Ascending aorta (tissue), 2 donors: ENCODE measurements at regions of chr7 and their contacts with region 1.

Region 1: DNA sequence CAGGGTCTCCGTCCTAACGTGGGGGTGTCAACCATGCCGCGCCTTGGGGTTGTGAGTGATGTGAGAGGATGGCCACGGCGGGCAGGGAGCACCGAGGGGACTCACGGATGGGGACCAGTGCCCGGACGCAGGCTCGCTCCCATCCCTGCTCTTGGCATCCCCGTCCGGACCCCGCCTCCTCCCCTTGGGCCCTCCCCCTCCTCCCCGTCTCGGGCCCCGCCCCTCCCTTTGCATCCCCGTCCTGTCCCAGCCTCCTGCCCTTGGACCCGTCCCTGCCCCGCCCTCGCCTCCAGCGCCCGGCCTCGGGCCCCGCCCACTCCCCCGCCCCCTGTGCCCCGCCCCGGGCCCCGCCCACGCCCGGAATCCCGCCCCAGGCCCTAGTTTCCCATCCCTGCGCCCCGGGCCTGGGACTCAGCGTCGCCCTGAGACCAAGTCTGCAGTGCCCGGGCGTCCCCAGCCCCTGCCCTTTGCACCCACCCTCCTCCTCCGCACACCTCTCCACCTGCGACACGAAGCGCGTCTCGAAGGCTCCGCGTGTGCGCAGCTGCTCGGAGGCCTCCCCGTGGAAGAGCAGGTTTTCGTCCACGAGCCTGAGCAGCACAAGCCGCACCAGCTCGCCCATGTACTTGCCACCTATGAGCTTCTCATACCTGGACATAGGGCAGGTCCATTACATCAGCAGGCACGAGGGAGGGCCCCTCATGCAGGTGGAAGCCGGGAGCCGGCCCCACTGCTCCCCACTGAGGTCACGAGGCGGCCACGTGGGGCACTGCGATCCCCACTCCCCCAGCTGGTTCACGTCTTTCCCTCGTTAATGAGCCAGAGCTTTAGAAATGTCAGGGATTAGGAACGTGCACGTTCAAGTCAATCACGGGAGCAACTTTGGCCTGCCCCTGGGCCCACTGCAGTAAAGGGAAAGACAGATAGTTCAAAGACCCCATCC is 5.1 kb upstream of the MYL7 start:
- DNase-seq: peak in 1 of 2 donors; percentile 88
- H3K4me3 ChIP-seq: peak overlapping the region; percentile 56 to 67
- H3K27ac ChIP-seq: no peak overlapping the region
- H3K4me1 ChIP-seq: peaks cover 0 to 8% of the 10 kb centered on the region in 2 donors
- H3K27me3 ChIP-seq: no peaks in the 10 kb centered on the region
- CTCF ChIP-seq: no peak

Region 2: DNA sequence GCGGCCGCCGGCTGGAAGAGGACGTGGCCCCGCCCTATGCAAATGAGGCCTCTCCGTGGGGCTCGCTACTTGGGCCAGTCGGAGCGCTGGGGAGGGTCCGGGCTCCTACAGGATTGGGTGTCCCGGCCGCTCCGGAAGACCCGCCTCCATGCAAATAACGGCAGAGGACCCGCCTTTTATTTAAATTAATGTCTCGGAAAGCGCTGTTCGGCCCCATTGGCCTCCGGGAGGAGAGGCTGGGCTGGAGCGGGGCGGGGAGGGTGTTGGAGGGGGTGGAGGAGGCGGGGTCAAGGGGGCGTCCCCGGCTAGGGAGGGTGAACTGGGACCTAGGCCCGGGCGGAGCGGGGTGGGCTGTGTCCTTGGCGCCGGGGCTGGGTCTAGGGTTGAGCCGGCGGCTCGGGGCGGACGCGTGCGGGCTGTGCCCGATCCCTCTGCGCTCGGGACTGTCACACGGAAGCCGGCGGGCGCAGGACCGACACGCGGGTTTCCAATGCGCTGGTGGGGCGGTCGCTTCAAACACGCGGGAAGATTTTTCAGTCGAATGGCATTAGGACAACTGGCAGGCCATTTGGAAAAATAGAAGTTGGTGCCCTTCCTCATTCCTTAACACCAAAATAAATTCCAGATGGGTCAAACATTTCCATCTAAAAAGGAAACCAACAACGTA is 63.6 kb before region 1 on chr7:
- intact Hi-C with region 1: loop called (anchors 1 kb)
- DNase-seq: peak; percentile 98 to 100
- H3K4me3 ChIP-seq: peak overlapping the region; percentile 66 to 84
- H3K27ac ChIP-seq: peak overlapping the region; percentile 91 to 100
- H3K4me1 ChIP-seq: peaks cover 18 to 56% of the 10 kb centered on the region in 2 donors
- H3K27me3 ChIP-seq: no peaks in the 10 kb centered on the region
- CTCF ChIP-seq: no peak

Region 3: DNA sequence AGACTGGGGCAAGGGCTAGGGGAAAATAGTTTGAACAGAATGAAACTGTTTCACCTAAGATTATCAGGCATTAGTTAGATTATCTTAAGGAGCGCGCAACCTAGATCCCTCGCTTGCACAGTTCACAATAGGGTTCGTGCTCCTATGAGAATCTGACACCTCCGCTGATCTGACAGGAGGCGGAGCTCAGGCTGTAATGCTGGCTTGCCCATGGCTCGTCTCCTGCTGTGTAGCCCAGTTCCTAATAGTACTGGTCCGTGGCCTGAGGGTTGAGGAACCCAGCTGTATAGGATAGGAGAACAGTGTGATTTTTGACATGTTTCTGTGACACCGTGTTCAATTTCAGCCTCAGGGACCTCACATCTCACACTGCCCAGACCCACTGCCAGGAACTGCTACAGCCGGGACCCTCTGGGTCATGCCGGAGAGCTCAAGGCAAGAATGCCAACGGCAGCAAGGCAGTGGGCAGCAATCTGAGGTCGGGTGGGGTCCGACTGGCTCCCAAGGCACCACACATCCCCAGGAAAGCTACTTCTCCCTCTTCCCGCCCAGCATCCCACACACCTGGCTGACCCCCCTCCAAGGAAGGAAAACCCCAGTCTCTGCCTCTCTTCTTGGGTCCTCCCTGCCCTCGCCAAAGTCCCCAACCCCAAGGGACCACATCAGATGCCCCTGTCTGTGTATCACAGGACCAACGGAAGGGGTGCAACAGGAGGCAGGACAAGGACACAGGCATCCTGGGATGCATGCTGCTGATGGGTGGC is 147.5 kb after region 1 on chr7:
- intact Hi-C with region 1: no loop called
- DNase-seq: peak; percentile 4 to 34
- H3K4me3 ChIP-seq: no peak overlapping the region
- H3K27ac ChIP-seq: no peak overlapping the region
- H3K4me1 ChIP-seq: peaks cover 0 to 3% of the 10 kb centered on the region in 2 donors
- H3K27me3 ChIP-seq: no peaks in the 10 kb centered on the region
- CTCF ChIP-seq: no peak